Endothelial cell of umbilical vein (primary cell): ENCODE measurements at regions of chr11 and their contacts with region 1.

Region 1: GRCh38 chr11:85627998-85628770 is at the start of gene TMEM126B:
- DNase-seq: peak; percentile 98
- H3K4me3 ChIP-seq: peak within 1 kb of the TSS; percentile 73 to 99 (median 91)
- H3K27ac ChIP-seq: peak within 1 kb of the TSS; percentile 68
- H3K4me1 ChIP-seq: peaks cover 16% of the 10 kb centered on the region
- H3K27me3 ChIP-seq: peaks cover 2 to 6% of the 10 kb centered on the region in 2 experiments
- CTCF ChIP-seq: no peak
- POLR2A ChIP-seq: peak; percentile 96
- total RNA-seq, gene TMEM126B: 49.4 and 51.2 TPM in 2 replicates

Region 2: GRCh38 chr11:85647604-85648299 is 19.6 kb after region 1 on chr11 and contains the start of gene TMEM126A:
- CTCF ChIA-PET with region 1: interaction called, 8 read pairs
- POLR2A ChIA-PET with region 1: interaction called, 5 read pairs
- dilution Hi-C with region 1: no loop called
- intact Hi-C with region 1: loop called (anchors 1 kb)
- DNase-seq: peak; percentile 87
- H3K4me3 ChIP-seq: peak within 1 kb of the TSS; percentile 68 to 96 (median 79)
- H3K27ac ChIP-seq: peak within 1 kb of the TSS; percentile 63
- H3K4me1 ChIP-seq: peaks cover 11% of the 10 kb centered on the region
- H3K27me3 ChIP-seq: peaks cover 7 to 20% of the 10 kb centered on the region in 2 experiments
- CTCF ChIP-seq: no peak
- POLR2A ChIP-seq: peak; percentile 93
- total RNA-seq, gene TMEM126A: 35.3 and 40.8 TPM in 2 replicates

Region 3: DNA sequence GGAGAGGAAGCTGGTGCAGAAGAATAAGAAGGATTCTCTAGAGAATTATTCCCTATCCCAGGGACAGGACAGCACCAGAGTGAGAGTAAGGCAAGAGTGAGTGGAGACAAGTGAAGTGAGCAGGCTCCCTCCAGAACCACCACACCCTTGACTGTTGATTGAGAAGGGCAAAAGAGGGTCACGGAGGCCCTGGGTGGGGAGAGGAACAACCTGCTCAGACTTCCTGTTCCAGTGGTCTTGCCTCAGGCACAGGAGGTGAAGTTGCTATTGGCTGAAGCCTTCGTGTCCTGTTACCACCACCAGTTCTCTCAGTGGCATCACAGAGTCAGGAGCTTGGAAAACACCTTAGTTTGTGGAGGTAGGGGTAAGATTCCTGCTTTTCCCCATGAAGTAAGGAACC is 109.6 kb after region 1 on chr11:
- CTCF ChIA-PET with region 1: no interaction called
- POLR2A ChIA-PET with region 1: no interaction called
- dilution Hi-C with region 1: no loop called
- intact Hi-C with region 1: no loop called
- DNase-seq: no peak
- H3K4me3 ChIP-seq: no peak overlapping the region
- H3K27ac ChIP-seq: peak overlapping the region; percentile 27
- H3K4me1 ChIP-seq: peaks cover 33% of the 10 kb centered on the region
- H3K27me3 ChIP-seq: no peaks in the 10 kb centered on the region
- CTCF ChIP-seq: no peak
- POLR2A ChIP-seq: no peak